ENCODE measurements at regions of chr3 and their contacts with region 1.

Region 1: GRCh38 chr3:114005481-114005880 is 50.8 kb downstream of the CCDC191 start:
- DNase-seq: peak; percentile 52
- ATAC-seq: peak; percentile 95
- H3K4me3 Mint-ChIP-seq: peak overlapping the region; percentile 76
- H3K27ac Mint-ChIP-seq: peak overlapping the region; percentile 97
- H3K4me1 Mint-ChIP-seq: peaks cover 61% of the 10 kb centered on the region
- H3K27me3 Mint-ChIP-seq: no peaks in the 10 kb centered on the region
- CTCF ChIP-seq: no peak

Region 2: GRCh38 chr3:113985541-113985940 is 19.9 kb before region 1 on chr3:
- CTCF ChIA-PET with region 1: interaction called, 6 read pairs
- POLR2A ChIA-PET with region 1: interaction called, 24 read pairs
- intact Hi-C with region 1: loop called (anchors 1 kb)
- DNase-seq: no peak
- ATAC-seq: peak; percentile 89
- H3K4me3 Mint-ChIP-seq: peak overlapping the region; percentile 56
- H3K27ac Mint-ChIP-seq: peak overlapping the region; percentile 88
- H3K4me1 Mint-ChIP-seq: peaks cover 57% of the 10 kb centered on the region
- H3K27me3 Mint-ChIP-seq: no peaks in the 10 kb centered on the region
- CTCF ChIP-seq: no peak

Region 3: DNA sequence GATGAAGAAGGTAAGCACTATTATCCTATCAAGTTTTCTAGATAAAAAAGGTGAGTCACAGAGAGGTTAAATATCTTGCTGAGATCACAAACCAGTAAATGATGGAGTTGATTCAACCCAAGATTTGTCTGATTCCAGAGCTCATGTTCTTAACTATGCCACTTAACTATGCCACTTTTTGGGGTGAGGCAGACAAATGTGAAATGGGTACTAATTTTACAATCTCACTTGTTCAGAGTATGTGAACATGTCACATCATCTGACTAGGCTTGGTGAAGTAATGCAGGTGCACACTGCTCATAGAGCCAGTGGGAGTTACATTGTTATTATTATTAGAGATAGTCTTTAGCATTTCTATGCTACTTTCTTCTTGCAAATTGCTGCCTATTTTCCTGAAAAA is 171.4 kb after region 1 on chr3:
- CTCF ChIA-PET with region 1: no interaction called
- POLR2A ChIA-PET with region 1: no interaction called
- intact Hi-C with region 1: no loop called
- DNase-seq: no peak
- ATAC-seq: no peak
- H3K4me3 Mint-ChIP-seq: no peak overlapping the region
- H3K27ac Mint-ChIP-seq: no peak overlapping the region
- H3K4me1 Mint-ChIP-seq: peaks cover 3% of the 10 kb centered on the region
- H3K27me3 Mint-ChIP-seq: peaks cover 7% of the 10 kb centered on the region
- CTCF ChIP-seq: no peak

Region 4: DNA sequence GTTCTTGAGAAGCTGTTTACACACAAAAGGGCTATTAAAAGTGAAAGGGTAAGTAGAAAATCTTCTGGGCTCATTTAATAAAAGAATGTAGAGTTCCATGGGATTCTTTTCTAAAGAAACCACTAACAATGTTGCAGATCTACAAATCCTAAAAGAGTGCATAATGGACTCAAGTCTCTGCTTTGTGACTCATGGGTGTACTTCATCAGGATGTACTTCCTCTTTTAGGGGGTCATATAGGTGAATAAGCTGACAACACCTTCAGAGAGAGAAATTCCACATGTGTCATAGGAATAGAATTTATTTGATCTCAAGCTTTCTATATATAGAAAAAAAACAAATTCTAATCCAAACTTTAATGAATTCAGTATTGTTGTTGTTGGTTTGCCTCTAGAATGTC is 643.9 kb after region 1 on chr3:
- CTCF ChIA-PET with region 1: no interaction called
- POLR2A ChIA-PET with region 1: no interaction called
- intact Hi-C with region 1: no loop called
- DNase-seq: no peak
- ATAC-seq: peak; percentile 28
- H3K4me3 Mint-ChIP-seq: no peak overlapping the region
- H3K27ac Mint-ChIP-seq: no peak overlapping the region
- H3K4me1 Mint-ChIP-seq: peaks cover 4% of the 10 kb centered on the region
- H3K27me3 Mint-ChIP-seq: no peaks in the 10 kb centered on the region
- CTCF ChIP-seq: no peak